ENCODE measurements at regions of chr2 and their contacts with region 1.

Region 1: GRCh38 chr2:176638167-176639015 is 369.1 kb downstream of the MTX2 start:
- DNase-seq: peak; percentile 82

Region 2: DNA sequence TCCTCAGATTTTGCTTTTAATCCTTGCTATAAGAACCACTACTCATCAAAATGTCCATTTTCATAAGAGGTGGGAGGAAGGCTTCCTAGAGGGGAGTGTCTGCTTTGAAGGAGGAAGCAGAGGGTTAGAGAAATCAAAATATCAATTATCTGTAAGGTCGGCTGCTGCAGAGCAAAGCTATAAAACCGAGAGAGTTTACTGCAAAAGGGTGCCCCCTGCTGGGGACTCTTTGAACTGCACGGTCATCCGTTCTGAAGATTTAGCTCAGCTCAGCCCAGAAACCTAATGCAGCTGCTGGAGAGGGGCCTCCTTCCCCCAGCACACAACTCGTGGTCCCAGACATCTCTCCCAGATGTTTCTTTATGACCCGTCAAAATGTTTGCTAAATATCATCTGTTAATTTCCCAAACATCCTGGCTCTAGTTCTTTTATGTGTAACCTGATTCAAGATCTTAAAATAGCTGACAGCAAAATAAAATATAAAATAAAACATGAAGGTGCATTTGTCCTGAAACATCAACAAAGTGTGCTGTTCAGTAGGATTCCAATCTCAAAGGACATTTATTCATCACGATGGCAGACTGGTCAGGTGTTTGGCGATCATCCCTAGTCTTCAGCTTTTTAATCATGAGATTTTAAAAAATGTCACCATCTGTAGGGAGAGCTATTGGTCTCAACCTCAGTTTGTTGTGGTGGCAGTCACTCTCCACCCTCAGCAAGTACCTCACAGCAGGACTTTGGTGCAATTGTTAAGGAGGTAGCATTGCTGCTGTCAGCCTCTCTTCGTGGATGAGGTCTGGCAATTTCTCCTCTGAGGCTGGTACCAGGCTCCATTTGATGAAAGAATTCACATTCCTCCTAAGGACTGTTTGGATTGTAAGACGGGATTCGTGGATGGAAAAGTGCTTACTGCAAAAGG is 183.2 kb before region 1 on chr2:
- in situ Hi-C with region 1: loop called (anchors 25 kb)
- DNase-seq: peak; percentile 84

Measured in ACHN (cell line).